ENCODE measurements at regions of chr2 and their contacts with region 1.

Region 1: DNA sequence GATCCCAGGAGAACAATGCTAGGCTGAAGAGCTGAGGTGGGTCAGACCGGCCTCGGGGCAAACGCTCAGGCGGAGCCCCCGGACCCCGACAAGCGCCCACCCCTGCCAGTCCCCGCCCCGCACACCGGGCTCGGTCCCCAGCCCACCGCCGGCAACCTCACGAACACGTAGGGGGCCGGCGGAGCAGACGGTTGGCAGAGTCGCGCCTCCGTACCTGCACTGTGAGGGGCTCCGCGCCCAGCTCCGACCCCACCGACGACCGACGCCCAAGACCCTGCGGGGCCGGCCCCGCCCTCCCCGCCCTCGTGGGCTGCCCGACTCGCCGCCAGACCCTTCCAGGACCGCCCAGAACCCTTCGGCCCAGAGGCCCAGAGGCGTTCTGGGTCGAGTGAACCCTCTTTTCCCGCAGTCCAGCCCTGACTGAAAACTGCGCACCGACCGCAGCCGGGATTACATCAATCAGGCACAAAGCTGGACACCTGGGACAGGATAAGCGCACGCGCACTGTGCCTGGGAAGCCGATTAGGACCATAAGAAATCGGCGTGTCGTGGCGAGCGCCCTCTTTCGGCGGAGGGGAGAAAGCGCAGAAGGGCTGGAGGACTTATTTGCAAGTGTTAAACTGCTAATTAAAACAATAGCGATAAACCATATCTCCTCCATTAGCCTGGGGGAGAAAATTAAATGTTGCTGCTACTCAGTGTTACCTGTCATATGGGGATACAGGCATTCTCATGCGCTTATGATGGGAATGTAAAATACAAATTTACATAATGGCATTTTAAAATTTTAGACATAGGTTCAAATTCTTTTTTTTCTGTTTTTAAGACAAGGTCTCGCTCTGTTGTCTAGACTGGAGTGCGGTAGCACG is 11.7 kb upstream of the DCTN1 start:
- DNase-seq: peak; percentile 94
- CTCF ChIP-seq: peak; percentile 95

Region 2: DNA sequence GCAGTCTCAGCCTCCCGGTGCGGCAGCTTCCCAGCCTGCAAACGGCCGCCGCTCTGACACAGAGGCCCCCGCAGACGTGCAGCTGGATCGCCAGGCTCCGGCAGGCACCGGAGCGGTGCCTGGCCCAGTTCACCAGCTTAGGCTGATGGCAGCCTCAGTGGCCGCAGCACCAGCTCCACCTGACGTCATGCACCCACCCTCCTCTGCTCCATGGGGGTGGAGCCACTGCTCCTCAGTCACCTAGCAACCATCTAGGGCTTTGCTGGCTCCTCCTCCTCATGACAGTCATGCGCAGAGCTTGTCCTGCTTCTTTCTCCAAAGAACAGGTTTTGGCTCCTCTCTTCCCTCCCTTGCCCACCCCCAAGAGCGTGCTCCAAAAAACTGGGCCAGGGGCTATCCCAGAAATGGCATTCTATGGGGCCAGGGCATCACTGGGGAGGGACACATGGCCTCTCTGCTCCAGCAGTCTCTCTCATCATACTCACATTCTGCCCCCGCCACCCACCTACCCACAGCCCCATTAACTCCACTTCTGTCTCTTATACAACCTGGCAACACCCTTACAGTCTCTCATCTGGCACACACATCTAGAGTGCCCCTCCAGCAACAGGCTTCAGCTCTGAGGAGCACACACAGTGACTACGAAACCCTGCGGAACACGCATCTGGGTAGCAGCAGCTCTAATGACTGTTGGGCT is 17.2 kb before region 1 on chr2:
- CTCF ChIA-PET with region 1: interaction called, 18 read pairs
- POLR2A ChIA-PET with region 1: no interaction called
- DNase-seq: no peak
- CTCF ChIP-seq: no peak

Region 3: DNA sequence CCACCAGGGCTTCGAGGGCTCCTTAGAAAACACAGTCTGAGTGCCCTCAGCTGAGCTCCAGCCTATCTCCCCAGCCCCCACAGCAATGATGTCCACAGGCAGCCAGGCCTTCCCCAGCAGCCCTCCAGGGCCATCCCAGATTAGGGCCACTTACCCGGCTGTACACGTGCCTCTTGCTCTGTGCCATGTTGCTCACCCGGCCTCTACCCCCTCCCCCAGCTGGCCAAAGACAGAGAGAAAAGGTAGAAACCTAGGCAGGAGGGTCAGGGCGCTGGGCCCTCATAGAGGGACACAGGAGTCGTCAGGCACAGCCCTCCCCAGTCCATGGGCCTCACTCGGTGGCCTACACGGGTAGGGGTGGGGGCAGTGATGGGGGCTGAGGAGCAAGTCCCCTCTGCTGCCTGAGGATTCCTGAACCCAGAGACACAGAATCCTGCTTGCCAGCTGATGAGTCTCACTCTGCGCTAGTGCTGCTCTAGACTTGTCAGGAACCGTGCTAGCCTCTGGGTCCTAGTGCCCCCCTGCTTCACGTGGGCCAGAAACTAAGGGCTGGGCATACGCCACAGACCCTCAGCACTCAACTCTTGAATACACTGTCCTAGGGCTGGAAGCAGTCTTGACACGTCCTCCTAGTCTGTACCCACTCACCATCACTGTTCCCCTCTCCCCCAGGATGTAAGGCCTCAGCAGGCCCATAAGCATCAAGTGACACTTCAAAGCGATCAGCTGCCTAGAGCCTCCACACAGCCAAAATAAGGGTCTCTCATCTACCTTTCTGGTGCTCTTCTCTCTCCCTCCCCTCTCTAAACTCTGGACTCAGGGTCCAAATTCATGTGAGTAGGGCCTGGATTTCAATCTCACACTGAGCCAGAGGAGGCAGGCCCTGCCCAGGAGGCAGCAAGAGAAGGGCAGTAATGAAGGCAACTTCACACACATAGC is 11.7 kb before region 1 on chr2 and contains the start of gene DCTN1:
- CTCF ChIA-PET with region 1: interaction called, 21 read pairs
- POLR2A ChIA-PET with region 1: no interaction called
- DNase-seq: peak; percentile 61
- CTCF ChIP-seq: no peak

Region 4: GRCh38 chr2:74498500-74499266 is 106.9 kb after region 1 on chr2:
- CTCF ChIA-PET with region 1: no interaction called
- POLR2A ChIA-PET with region 1: no interaction called
- DNase-seq: peak; percentile 39
- CTCF ChIP-seq: no peak

Region 5: GRCh38 chr2:74740389-74741075 is 348.7 kb after region 1 on chr2:
- CTCF ChIA-PET with region 1: no interaction called
- POLR2A ChIA-PET with region 1: no interaction called
- DNase-seq: no peak
- CTCF ChIP-seq: no peak

Measured in GM10248 (cell line).